Activated CD4-positive, alpha-beta memory T cell treated with anti-CD3 and anti-CD28 coated beads for 36 hours (primary cell): ENCODE measurements at regions of chr22 and their contacts with region 1.

Region 1: GRCh38 chr22:22422629-22423112 is 85.9 kb downstream of the ZNF280B start:
- DNase-seq: peak; percentile 78
- H3K4me3 Mint-ChIP-seq: no peak overlapping the region
- H3K27ac Mint-ChIP-seq: no peak overlapping the region
- H3K4me1 Mint-ChIP-seq: no peaks in the 10 kb centered on the region
- H3K27me3 Mint-ChIP-seq: peaks cover 19% of the 10 kb centered on the region

Region 2: DNA sequence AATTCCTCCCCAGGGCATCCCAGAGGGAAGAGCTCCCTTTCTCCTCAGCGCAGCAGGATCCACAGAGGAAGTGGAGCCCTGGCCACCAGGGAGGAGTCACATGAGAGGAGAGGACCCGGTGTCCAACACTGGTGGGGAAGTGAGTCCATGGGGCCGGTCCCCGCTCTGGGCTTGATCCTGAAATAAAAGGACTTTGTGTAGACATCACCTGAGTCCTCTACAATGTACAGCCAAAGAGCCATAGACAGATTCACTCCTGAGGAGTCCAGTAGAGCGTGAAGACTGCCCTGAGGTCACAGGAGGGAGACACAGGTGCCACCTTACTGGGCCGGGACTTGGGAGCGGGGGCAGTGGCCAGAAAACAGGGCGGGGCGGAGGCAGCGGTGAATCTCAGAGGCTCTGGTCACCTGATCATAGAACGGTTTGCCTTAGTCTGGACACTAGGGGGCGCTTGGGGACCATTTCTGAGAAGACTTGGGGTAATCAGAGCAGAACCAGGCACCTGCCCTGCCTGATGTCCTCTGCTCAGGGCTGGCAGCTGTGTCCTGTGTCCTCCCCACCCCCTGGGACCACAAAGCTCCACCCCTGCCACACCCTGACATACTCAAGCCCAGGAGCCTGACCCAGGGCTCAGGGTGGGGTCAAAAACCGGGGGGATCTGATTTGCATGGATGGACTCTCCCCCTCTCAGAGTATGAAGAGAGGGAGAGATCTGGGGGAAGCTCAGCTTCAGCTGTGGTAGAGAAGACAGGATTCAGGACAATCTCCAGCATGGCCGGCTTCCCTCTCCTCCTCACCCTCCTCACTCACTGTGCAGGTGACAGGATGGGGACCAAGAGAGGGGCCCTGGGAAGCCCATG is 65.4 kb before region 1 on chr22:
- CTCF ChIA-PET with region 1: interaction called, 7 read pairs
- POLR2A ChIA-PET with region 1: no interaction called
- intact Hi-C with region 1: loop called (anchors 5 kb)
- DNase-seq: peak; percentile 86
- H3K4me3 Mint-ChIP-seq: no peak overlapping the region
- H3K27ac Mint-ChIP-seq: no peak overlapping the region
- H3K4me1 Mint-ChIP-seq: peaks cover 2% of the 10 kb centered on the region
- H3K27me3 Mint-ChIP-seq: peaks cover 32% of the 10 kb centered on the region

Region 3: DNA sequence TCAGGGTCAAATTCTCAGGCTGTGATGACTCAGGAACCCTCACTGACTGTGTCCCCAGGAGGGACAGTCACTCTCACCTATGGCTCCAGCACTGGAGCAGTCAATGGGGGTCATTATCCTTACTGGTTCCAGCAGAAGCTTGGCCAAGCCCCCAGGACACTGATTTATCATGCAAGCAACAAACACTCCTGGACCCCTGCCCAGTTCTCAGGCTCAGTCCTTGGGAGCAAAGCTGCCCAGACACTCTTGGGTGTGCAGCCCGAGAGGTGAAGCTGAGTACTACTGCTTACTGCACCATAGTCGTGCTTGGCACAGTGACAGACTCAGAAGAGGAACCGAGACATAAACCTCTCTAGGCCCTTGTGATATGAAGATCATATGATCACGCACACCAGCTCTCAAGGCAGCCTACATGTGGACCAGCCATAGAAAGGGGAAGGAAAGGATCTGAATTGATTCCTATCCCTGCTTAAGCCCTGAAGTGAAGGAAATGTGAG is 27.7 kb after region 1 on chr22:
- CTCF ChIA-PET with region 1: no interaction called
- POLR2A ChIA-PET with region 1: no interaction called
- intact Hi-C with region 1: no loop called
- DNase-seq: no peak
- H3K4me3 Mint-ChIP-seq: no peak overlapping the region
- H3K27ac Mint-ChIP-seq: no peak overlapping the region
- H3K4me1 Mint-ChIP-seq: no peaks in the 10 kb centered on the region
- H3K27me3 Mint-ChIP-seq: peaks cover 43% of the 10 kb centered on the region

Region 4: GRCh38 chr22:22578702-22579424 is 156.2 kb after region 1 on chr22:
- CTCF ChIA-PET with region 1: no interaction called
- POLR2A ChIA-PET with region 1: no interaction called
- intact Hi-C with region 1: no loop called
- DNase-seq: no peak
- H3K4me3 Mint-ChIP-seq: no peak overlapping the region
- H3K27ac Mint-ChIP-seq: no peak overlapping the region
- H3K4me1 Mint-ChIP-seq: no peaks in the 10 kb centered on the region
- H3K27me3 Mint-ChIP-seq: peaks cover 4% of the 10 kb centered on the region